ENCODE measurements at regions of chr2 and their contacts with region 1.

Region 1: DNA sequence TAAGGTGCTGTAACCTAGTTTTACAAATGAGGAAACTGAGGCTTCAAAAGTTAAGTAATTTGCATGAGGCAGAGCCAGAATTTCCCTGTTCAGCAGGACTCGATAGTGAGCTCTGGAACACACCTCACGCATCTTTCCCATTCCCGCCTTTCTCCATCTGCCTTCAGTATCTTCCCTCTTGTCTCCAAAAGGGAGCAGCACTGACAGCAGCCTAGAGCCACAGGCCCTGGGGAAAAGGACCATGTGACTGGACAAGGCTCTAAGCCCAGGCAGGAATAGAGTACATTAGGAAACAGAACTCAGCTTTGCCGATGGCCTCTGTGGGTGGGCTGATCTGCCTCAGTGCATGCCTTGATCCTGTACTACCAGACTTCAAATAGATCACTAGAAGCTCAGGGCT is 21.5 kb downstream of the GPR155 start:
- DNase-seq: peak in 1 of 5 donors; percentile 35
- ATAC-seq: peak in 2 of 4 donors; percentile 42 to 51
- H3K4me3 ChIP-seq: no peak overlapping the region
- H3K27ac ChIP-seq: no peak overlapping the region
- H3K4me1 ChIP-seq: no peaks in the 10 kb centered on the region
- H3K27me3 ChIP-seq: no peaks in the 10 kb centered on the region
- CTCF ChIP-seq: peak in 3 of 12 donors; percentile 15 to 27 (median 25)
- POLR2A ChIP-seq: no peak

Region 2: DNA sequence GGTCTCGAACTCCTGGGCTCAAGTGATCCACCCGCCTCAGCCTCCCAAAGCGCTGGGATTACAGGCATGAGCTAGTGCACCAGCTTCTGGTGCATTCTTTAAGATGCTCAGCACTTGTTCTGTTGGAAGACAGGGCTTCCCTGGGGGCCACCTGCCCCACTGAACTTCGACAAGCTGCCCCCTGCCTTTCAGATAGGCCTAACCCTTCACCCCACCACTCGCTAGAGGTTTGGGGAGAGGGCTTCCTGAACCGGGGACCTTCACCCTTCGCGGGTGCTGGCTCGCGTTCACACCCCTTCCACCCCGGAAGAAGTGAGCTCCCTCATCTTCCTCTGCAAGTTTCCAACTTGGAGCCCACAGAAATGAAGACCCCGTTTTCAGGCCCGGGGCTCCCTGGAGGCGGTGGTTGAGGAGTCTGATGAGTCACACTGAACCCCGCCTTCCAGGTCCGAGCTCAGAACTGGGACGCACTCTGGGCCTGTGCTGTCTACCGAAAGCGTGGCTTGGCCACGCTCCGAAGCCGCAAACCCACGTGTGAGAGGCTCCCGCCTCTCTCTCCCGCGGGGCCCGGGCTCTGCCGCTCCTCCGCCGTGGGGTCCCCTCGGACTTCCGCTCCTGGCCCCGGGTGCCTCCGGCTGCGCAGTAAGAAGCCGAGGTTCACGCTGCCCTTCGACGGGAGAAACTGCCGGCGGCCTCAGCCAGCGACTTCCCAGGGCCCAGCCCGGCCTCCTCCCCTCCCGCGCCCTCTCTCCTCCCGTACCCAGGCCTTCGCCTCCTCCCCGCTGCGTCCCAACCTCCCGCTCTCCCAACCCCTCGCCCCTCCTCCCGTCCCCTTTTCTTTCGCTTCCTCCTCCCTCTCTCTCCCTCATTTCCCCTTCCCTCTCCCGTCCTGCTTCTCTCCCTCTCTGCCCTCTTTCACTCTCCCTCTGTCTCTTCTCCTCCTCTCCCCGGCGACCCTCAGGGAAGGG is 452.7 kb before region 1 on chr2:
- intact Hi-C with region 1: no loop called
- DNase-seq: peak; percentile 80 to 89 (median 82)
- ATAC-seq: peak; percentile 78 to 95 (median 92)
- H3K4me3 ChIP-seq: peak overlapping the region; percentile 19 to 65 (median 50)
- H3K27ac ChIP-seq: peak overlapping the region; percentile 31 to 95 (median 86)
- H3K4me1 ChIP-seq: peaks cover 0 to 48% (median 24%) of the 10 kb centered on the region in 12 donors
- H3K27me3 ChIP-seq: no peaks in the 10 kb centered on the region
- CTCF ChIP-seq: no peak
- POLR2A ChIP-seq: no peak

Region 3: DNA sequence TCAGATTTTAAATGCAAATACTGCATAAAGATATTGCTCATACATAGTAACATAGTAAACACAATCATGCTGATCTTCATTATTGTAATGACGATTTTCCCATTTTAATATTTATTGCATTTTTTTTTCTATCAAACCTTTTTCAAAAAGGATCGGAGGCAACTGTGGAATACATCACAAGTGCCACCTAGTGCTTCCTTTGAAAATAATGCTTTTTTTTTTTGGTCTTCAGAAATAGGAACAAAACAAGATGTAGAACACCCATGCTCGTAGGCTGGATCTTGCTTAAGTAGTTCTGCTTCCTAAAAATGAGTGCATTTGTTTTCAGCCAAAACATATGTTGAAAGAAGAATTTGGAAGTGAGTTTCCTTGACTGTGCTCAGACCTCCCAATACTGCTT is 57.2 kb after region 1 on chr2:
- intact Hi-C with region 1: loop called (anchors 1 to 10 kb)
- DNase-seq: no peak
- ATAC-seq: peak in 3 of 4 donors; percentile 18 to 42 (median 37)
- H3K4me3 ChIP-seq: no peak overlapping the region
- H3K27ac ChIP-seq: peak overlapping the region in 1 of 12 donors; percentile 85
- H3K4me1 ChIP-seq: peaks cover 0 to 23% (median 0%) of the 10 kb centered on the region in 12 donors
- H3K27me3 ChIP-seq: no peaks in the 10 kb centered on the region
- CTCF ChIP-seq: peak in 11 of 12 donors; percentile 10 to 52 (median 34)
- POLR2A ChIP-seq: no peak

Region 4: GRCh38 chr2:174546581-174547506 is 81.5 kb after region 1 on chr2:
- intact Hi-C with region 1: loop called in 1 of 10 experiments (anchors 2 kb)
- DNase-seq: no peak
- ATAC-seq: peak in 3 of 4 donors; percentile 37 to 70 (median 53)
- H3K4me3 ChIP-seq: no peak overlapping the region
- H3K27ac ChIP-seq: no peak overlapping the region
- H3K4me1 ChIP-seq: no peaks in the 10 kb centered on the region
- H3K27me3 ChIP-seq: peaks cover 0 to 3% (median 0%) of the 10 kb centered on the region in 9 donors
- CTCF ChIP-seq: peak in 8 of 12 donors; percentile 15 to 36 (median 24)
- POLR2A ChIP-seq: no peak

Region 5: GRCh38 chr2:174603280-174603679 is 138.0 kb after region 1 on chr2:
- intact Hi-C with region 1: loop called (anchors 2 to 5 kb)
- DNase-seq: peak in 4 of 5 donors; percentile 45 to 68 (median 62)
- ATAC-seq: peak; percentile 80 to 94 (median 93)
- H3K4me3 ChIP-seq: no peak overlapping the region
- H3K27ac ChIP-seq: peak overlapping the region in 1 of 12 donors; percentile 54
- H3K4me1 ChIP-seq: peaks cover 0 to 75% (median 3%) of the 10 kb centered on the region in 12 donors
- H3K27me3 ChIP-seq: no peaks in the 10 kb centered on the region
- CTCF ChIP-seq: peak; percentile 43 to 77 (median 60)
- POLR2A ChIP-seq: no peak

Region 6: DNA sequence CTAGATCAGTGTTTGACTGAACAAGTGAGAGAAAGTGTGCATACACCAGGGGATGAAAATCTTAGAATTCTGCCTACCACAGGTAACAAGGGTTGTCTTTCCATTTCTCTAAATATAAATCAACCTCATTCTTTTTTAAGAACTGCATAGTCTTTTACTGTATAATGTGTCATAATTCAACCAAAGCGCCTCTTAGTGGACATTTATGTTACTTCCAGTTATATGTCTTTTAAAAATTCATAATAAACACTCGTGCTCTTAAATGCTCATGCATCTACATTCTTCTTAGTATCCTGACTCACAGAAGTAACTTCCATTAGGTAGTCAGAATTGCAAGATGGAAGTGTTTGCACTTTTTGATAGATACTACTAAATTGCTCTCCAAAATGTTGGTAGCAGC is 222.8 kb after region 1 on chr2:
- intact Hi-C with region 1: loop called in 9 of 10 experiments (anchors 2 to 5 kb)
- DNase-seq: no peak
- ATAC-seq: peak in 1 of 4 donors; percentile 23
- H3K4me3 ChIP-seq: no peak overlapping the region
- H3K27ac ChIP-seq: no peak overlapping the region
- H3K4me1 ChIP-seq: peaks cover 0 to 23% (median 0%) of the 10 kb centered on the region in 12 donors
- H3K27me3 ChIP-seq: no peaks in the 10 kb centered on the region
- CTCF ChIP-seq: peak; percentile 13 to 62 (median 37)
- POLR2A ChIP-seq: no peak

Region 7: GRCh38 chr2:174697255-174697654 is 231.9 kb after region 1 on chr2:
- intact Hi-C with region 1: loop called in 1 of 10 experiments (anchors 5 kb)
- DNase-seq: peak in 4 of 5 donors; percentile 45 to 52 (median 49)
- ATAC-seq: peak in 3 of 4 donors; percentile 83 to 89 (median 87)
- H3K4me3 ChIP-seq: no peak overlapping the region
- H3K27ac ChIP-seq: no peak overlapping the region
- H3K4me1 ChIP-seq: no peaks in the 10 kb centered on the region
- H3K27me3 ChIP-seq: no peaks in the 10 kb centered on the region
- CTCF ChIP-seq: peak; percentile 42 to 82 (median 74)
- POLR2A ChIP-seq: no peak

Measured in heart left ventricle (tissue), 16 donors.